HCT116 (cell line): ENCODE measurements at regions of chr4 and their contacts with region 1.

Region 1: GRCh38 chr4:149999485-150000074 is 78.7 kb upstream of the DCLK2 start:
- DNase-seq: peak; percentile 60
- ATAC-seq: peak; percentile 74
- H3K4me3 ChIP-seq: no peak overlapping the region
- H3K27ac ChIP-seq: no peak overlapping the region
- H3K4me1 ChIP-seq: peaks cover 0 to 31% of the 10 kb centered on the region in 2 experiments; a peak in 2 of 4 replicates
- H3K27me3 ChIP-seq: no peaks in the 10 kb centered on the region
- CTCF ChIP-seq: peak; percentile 65 to 77 (median 76)
- POLR2A ChIP-seq: no peak
- RAD21 ChIP-seq: peak; percentile 91

Region 2: GRCh38 chr4:149017002-149017734 is 982.4 kb before region 1 on chr4:
- CTCF ChIA-PET with region 1: no interaction called
- POLR2A ChIA-PET with region 1: no interaction called
- RAD21 ChIA-PET with region 1: no interaction called
- intact Hi-C with region 1: no loop called
- DNase-seq: no peak
- ATAC-seq: no peak
- H3K4me3 ChIP-seq: no peak overlapping the region
- H3K27ac ChIP-seq: no peak overlapping the region
- H3K4me1 ChIP-seq: no peaks in the 10 kb centered on the region
- H3K27me3 ChIP-seq: no peaks in the 10 kb centered on the region
- CTCF ChIP-seq: no peak
- POLR2A ChIP-seq: no peak
- RAD21 ChIP-seq: no peak

Region 3: GRCh38 chr4:150209140-150209829 is 209.7 kb after region 1 on chr4:
- CTCF ChIA-PET with region 1: interaction called, 12 read pairs
- POLR2A ChIA-PET with region 1: no interaction called
- RAD21 ChIA-PET with region 1: no interaction called
- intact Hi-C with region 1: loop called (anchors 1 kb)
- DNase-seq: peak; percentile 49
- ATAC-seq: peak; percentile 94
- H3K4me3 ChIP-seq: no peak overlapping the region
- H3K27ac ChIP-seq: no peak overlapping the region
- H3K4me1 ChIP-seq: peaks cover 0 to 6% of the 10 kb centered on the region in 2 experiments; a peak in 1 of 4 replicates
- H3K27me3 ChIP-seq: no peaks in the 10 kb centered on the region
- CTCF ChIP-seq: peak; percentile 64 to 83 (median 69)
- POLR2A ChIP-seq: no peak
- RAD21 ChIP-seq: peak; percentile 82